ENCODE measurements at regions of chr12 and their contacts with region 1.

Region 1: DNA sequence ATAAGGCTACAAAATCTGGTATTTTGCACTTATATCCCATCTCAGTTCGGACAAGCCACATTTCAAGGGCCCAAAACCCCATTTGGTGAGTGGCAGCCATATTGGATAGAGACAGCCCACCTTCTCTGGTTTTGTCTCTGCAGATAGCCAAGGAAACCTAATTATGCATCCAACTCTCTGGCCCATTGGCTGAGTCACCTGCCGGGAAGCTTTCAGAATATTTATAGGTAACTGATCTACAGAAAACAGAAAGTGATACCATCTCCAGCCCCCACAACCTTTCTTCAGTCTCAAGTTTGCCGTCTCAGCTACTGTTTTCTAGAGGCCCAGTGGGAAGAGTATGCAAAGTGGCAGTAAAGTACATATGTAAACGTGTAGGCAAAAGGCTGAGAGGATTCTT is 33.7 kb upstream of the PPP1CC start:
- DNase-seq: peak; percentile 81
- ATAC-seq: peak; percentile 84
- H3K4me3 Mint-ChIP-seq: peak overlapping the region; percentile 9
- H3K27ac Mint-ChIP-seq: peak overlapping the region; percentile 98
- H3K4me1 Mint-ChIP-seq: peaks cover 74% of the 10 kb centered on the region
- H3K27me3 Mint-ChIP-seq: no peaks in the 10 kb centered on the region

Region 2: DNA sequence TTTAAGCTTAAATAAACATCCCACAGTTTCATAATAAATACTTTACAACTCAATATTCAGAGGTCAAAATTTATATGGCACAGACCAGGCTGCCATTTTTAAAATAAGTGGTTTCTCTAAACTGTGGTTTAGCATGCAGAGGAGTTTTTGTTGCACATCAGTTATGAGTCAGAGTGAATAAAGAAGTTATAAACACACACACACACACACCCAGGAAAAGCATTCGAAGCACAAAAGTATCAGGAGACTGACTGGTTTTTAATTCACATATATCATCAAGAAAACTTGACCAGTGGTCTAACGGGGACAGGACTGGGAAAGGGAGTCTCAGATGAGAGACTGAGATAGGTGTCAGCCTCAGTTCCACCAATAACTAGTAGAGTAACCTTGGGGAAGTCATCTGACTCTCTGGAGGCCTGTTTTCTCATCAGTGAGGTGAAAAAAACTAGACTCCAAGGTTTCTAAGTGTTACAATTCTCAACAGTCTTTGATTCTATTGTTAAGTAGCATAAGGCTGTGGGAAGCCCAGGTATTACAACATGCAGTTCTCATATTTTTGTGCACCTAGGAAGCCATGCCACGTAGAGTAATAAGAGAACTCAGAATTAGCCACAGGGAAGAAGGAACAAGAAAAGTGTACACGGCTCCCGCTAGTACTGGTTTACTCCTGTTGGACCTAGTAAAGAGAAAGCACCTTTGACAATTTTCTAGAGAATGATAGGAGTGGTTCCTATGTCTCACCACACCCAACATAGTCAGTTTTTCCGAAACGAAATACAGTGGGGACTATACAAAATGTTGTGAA is 198.5 kb before region 1 on chr12:
- CTCF ChIA-PET with region 1: no interaction called
- POLR2A ChIA-PET with region 1: no interaction called
- intact Hi-C with region 1: loop called (anchors 1 kb)
- DNase-seq: peak; percentile 61
- ATAC-seq: peak; percentile 67
- H3K4me3 Mint-ChIP-seq: peak overlapping the region; percentile 91
- H3K27ac Mint-ChIP-seq: peak overlapping the region; percentile 100
- H3K4me1 Mint-ChIP-seq: peaks cover 80% of the 10 kb centered on the region
- H3K27me3 Mint-ChIP-seq: no peaks in the 10 kb centered on the region

Region 3: GRCh38 chr12:110619534-110619953 is 156.9 kb before region 1 on chr12:
- CTCF ChIA-PET with region 1: interaction called, 4 read pairs
- POLR2A ChIA-PET with region 1: no interaction called
- intact Hi-C with region 1: loop called (anchors 1 kb)
- DNase-seq: peak; percentile 68
- ATAC-seq: peak; percentile 92
- H3K4me3 Mint-ChIP-seq: peak overlapping the region; percentile 19
- H3K27ac Mint-ChIP-seq: peak overlapping the region; percentile 55
- H3K4me1 Mint-ChIP-seq: peaks cover 20% of the 10 kb centered on the region
- H3K27me3 Mint-ChIP-seq: no peaks in the 10 kb centered on the region

Region 4: DNA sequence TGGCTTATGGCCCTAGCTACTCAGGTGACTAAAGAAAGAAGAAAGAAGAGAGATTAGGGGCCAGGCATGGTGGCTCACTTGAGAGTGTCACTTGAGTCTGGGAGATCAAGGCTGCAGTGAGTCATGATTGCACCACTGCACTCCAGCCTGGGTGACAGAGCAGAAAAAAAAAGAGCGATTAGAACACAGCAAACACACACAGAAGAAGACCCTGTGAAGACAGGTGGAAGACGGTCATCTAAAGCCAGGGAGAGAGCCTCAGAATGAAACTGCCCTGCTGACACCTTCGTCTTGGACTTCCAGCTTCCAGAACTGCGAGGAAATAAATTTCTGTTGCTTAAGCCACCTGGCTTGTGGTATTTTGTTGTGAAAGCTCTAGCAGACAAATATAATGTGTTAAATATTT is 16.2 kb before region 1 on chr12:
- CTCF ChIA-PET with region 1: interaction called, 3 read pairs
- POLR2A ChIA-PET with region 1: interaction called, 3 read pairs
- intact Hi-C with region 1: loop called in 1 of 2 experiments (anchors 1 kb)
- DNase-seq: peak; percentile 53
- ATAC-seq: peak; percentile 96
- H3K4me3 Mint-ChIP-seq: no peak overlapping the region
- H3K27ac Mint-ChIP-seq: peak overlapping the region; percentile 5
- H3K4me1 Mint-ChIP-seq: peaks cover 20% of the 10 kb centered on the region
- H3K27me3 Mint-ChIP-seq: no peaks in the 10 kb centered on the region